ENCODE measurements at regions of chr3 and their contacts with region 1.

Region 1: DNA sequence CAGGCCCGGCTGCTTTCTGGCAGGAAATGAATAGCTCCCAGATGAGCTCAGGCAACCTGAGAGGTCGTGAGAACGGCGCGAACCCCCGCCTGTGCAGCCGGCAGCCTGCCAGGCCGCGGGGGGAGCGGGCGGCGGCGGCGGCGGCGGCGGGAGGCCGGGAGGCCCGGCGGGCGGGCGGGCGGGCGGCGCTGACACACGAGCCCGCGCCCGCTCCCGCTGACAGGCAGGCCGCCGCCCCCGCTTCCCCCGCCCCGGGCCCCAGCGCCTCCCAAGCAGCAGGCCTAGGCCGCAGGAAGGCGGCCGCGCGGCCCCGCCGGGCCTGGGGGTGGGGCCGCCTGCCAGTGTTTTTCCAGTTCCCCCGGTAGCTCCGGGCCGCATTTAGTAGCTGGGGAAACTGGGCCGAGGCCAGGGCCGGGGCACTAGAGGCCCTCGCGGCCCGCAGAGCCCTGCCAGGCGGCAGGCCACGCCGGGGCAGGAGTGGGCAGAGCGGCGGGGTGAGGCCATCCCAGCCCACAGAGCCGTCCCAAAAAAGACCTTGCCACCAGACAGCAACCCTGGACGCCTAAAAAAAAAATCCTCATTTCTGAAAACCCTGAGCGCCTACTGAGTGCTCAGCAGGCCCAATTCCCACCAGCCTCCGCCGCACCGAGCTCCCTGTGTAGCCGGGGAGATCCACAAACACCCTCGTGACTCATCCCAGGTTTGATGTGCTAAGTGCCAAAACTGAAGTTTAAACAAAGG is 5.6 kb downstream of the HES1 start:
- DNase-seq: peak; percentile 96

Region 2: DNA sequence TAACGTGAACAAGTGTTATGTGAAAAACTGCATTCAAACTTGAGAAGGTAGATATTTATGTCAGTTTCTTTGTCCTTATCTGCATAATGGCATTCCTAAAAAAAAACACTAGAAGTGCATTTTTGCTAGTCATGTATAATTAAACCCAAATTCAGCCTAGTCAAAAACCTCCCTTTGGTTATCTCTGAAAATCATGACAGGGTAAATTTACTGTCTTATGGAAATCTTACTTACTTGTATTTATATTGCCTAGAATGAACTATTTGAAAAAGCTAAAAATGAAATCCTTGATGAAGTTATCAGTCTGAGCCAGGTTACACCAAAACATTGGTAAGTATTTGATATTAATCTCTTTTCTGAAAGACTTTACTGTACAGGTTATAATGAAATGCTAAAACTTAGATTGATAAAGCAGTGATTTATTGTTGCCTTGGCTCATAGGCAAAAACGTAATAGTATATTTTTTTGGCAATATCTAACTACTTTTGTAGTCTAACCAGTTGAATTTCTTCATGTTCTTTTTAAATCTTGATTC is 493.0 kb before region 1 on chr3:
- intact Hi-C with region 1: no loop called
- DNase-seq: no peak

Region 3: DNA sequence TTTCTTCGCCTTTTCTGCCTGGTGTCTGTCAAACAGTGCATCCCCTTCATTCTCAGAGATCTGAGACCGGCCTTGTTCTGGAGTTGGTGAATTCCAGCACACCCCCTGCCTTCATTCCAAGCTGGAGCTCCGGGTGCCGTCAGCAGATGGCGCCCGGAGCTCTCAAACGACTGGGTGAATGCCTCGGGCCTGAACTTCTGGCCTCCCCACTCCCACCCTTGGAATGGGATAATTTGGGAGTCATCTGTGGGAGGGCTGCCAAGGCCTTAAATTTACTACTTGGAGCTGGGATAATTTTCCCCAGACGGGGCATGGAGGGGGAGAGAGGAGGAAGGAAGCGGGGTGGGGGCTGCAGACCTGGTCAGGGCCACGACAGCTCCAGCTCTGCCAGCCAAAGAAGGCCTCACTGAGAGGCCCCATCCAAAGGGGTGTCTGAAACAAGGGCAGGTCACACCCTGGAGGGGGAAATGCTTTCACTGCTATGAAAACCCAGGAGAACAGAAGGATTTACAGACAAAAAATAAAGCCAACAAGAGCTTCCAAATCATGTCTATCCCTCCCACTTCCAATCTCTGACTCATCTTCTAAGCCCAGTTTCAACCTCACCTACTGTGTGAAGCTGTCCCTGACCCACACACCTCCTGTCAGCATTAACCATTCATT is 360.6 kb before region 1 on chr3:
- intact Hi-C with region 1: loop called (anchors 5 kb)
- DNase-seq: peak; percentile 89

Region 4: DNA sequence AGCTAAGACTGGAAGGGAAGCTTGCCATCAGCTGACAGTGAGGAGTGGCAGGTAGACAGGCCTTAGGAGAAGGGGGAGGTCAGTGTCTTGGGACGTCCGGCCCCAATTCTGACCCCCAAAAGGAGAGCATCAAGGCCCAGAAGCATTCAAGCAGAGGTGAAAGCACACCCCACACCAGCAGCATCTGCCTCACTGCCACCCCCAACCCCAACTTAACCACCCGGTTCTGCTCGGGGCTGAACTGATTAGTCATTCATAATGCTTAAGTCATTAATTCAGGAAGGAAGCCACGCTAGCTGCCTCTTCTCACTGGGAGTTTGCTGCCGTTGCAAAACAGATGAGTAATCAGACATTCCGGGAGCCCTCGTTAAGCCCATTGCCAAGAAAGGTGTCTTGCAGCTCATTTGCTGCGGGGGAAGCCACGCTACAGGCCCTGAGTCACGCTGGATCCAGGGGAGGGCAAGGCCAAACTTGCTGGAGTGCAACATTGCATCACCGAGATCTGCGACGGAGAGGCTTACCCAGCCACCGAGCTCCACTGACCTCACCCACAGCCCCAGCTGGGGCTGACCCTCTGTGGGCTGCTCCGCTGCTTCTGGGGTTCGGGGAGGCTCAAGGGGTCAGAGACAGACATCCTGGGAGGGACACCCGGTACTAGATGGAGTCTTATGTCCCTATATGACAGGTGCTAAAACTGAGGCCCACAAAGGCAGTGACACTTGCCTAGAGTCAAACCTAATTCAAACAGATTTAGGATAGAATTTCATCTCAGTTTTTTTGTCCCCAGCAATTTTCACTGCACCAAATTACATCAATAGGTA is 52.0 kb before region 1 on chr3:
- intact Hi-C with region 1: no loop called
- DNase-seq: peak; percentile 95

Region 5: GRCh38 chr3:194176274-194176991 is 34.8 kb after region 1 on chr3:
- intact Hi-C with region 1: no loop called
- DNase-seq: no peak

Region 6: GRCh38 chr3:194204042-194204987 is 62.7 kb after region 1 on chr3:
- intact Hi-C with region 1: no loop called
- DNase-seq: no peak